H1 (cell line): ENCODE measurements at regions of chr1 and their contacts with region 1.

Region 1: DNA sequence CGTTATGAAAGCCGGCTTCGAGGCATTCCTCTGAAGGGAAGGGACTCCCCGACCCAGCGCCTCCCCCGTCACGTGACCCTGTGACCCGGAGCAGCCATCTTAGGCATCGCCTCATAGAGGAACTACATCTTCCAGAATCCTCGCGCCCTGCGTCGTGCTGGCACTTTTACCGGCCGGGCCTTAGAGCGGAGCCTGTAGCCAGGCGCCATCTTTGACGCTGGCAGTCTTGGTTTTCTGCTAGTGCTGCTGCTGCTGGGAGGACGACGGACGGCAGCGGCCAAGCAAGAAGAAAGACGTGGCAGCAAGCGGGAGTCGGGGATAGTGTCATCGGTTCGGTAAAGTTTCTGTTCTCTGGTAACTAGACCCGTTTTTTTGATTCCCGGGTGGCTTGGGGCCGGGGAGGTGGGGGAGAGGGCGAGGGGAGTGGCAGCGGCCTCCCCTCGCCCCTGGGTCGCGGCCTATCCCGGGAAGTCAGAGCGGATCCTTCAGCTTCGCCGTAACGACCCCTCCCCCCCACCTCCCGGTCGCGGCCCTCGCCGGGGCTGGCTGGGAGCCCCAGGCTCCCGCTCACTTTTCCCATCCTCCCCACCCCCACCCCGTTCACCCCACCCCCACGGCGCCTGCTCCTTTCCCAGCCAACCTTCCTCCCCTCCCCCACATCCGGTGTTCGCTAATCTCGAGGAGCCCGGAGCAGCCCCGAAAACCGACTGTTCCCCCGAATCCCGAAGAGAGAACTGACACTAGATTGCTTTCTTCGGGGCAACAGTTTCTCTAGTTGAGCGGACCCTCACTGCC is at the starts of genes ZBED6 and ZC3H11A:
- DNase-seq: peak; percentile 94 to 98
- H3K4me3 ChIP-seq: peak within 1 kb of the TSS; percentile 84 to 92 (median 86)
- H3K27ac ChIP-seq: peak within 1 kb of the TSS; percentile 94
- H3K4me1 ChIP-seq: peaks cover 0 to 4% (median 0%) of the 10 kb centered on the region in 4 experiments; a peak in 1 of 7 replicates
- H3K27me3 ChIP-seq: no peaks in the 10 kb centered on the region
- CTCF ChIP-seq: no peak
- EP300 ChIP-seq: no peak
- POLR2A ChIP-seq: peak; percentile 69 to 90
- RAD21 ChIP-seq: no peak
- total RNA-seq, gene ZBED6: 24.1 and 25.9 TPM in 2 replicates
- total RNA-seq, gene ZC3H11A: 102 and 105 TPM in 2 replicates

Region 2: GRCh38 chr1:203751051-203751450 is 44.6 kb before region 1 on chr1:
- CTCF ChIA-PET with region 1: no interaction called
- POLR2A ChIA-PET with region 1: no interaction called
- DNase-seq: no peak
- H3K4me3 ChIP-seq: no peak overlapping the region
- H3K27ac ChIP-seq: no peak overlapping the region
- H3K4me1 ChIP-seq: no peaks in the 10 kb centered on the region; a peak in 2 of 7 replicates
- H3K27me3 ChIP-seq: no peaks in the 10 kb centered on the region
- CTCF ChIP-seq: no peak
- EP300 ChIP-seq: no peak
- POLR2A ChIP-seq: no peak
- RAD21 ChIP-seq: no peak

Region 3: DNA sequence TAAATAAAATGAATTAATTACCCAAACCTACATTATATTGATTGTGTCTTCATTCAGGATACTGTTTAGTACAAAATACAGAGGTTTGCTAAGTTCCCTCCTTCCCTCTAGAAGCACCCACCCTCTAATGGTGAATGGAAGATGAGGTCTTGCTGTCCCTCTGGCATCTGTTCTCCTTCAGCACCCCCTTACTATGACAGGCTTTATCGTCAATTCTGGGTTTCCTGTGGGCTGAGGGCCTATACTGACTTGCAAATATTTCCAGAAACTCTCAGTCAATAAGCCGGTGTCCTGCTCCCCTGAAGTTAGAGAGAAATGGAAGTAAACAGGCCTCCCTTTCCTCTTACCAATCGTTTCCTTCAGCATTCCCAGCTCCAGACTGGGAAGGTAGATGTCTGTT is 17.5 kb before region 1 on chr1:
- CTCF ChIA-PET with region 1: no interaction called
- POLR2A ChIA-PET with region 1: interaction called, 10 read pairs
- DNase-seq: no peak
- H3K4me3 ChIP-seq: no peak overlapping the region
- H3K27ac ChIP-seq: no peak overlapping the region
- H3K4me1 ChIP-seq: no peaks in the 10 kb centered on the region
- H3K27me3 ChIP-seq: no peaks in the 10 kb centered on the region
- CTCF ChIP-seq: no peak
- EP300 ChIP-seq: no peak
- POLR2A ChIP-seq: no peak
- RAD21 ChIP-seq: no peak

Region 4: GRCh38 chr1:203807196-203807595 is 11.6 kb after region 1 on chr1:
- CTCF ChIA-PET with region 1: interaction called, 3 read pairs
- POLR2A ChIA-PET with region 1: interaction called, 20 read pairs
- DNase-seq: no peak
- H3K4me3 ChIP-seq: no peak overlapping the region
- H3K27ac ChIP-seq: no peak overlapping the region
- H3K4me1 ChIP-seq: no peaks in the 10 kb centered on the region
- H3K27me3 ChIP-seq: no peaks in the 10 kb centered on the region
- CTCF ChIP-seq: no peak
- EP300 ChIP-seq: no peak
- POLR2A ChIP-seq: no peak
- RAD21 ChIP-seq: no peak

Region 5: GRCh38 chr1:203825778-203826574 is 30.3 kb after region 1 on chr1:
- CTCF ChIA-PET with region 1: no interaction called
- POLR2A ChIA-PET with region 1: no interaction called
- DNase-seq: no peak
- H3K4me3 ChIP-seq: no peak overlapping the region
- H3K27ac ChIP-seq: no peak overlapping the region
- H3K4me1 ChIP-seq: no peaks in the 10 kb centered on the region
- H3K27me3 ChIP-seq: no peaks in the 10 kb centered on the region
- CTCF ChIP-seq: no peak
- EP300 ChIP-seq: no peak
- POLR2A ChIP-seq: no peak
- RAD21 ChIP-seq: no peak

Region 6: GRCh38 chr1:203930331-203930730 is 134.7 kb after region 1 on chr1:
- CTCF ChIA-PET with region 1: no interaction called
- POLR2A ChIA-PET with region 1: no interaction called
- DNase-seq: no peak
- H3K4me3 ChIP-seq: no peak overlapping the region
- H3K27ac ChIP-seq: no peak overlapping the region
- H3K4me1 ChIP-seq: no peaks in the 10 kb centered on the region
- H3K27me3 ChIP-seq: no peaks in the 10 kb centered on the region
- CTCF ChIP-seq: no peak
- EP300 ChIP-seq: no peak
- POLR2A ChIP-seq: no peak
- RAD21 ChIP-seq: no peak